ENCODE measurements at regions of chr6 and their contacts with region 1.

Region 1: GRCh38 chr6:16533721-16534136 is 227.5 kb downstream of the ATXN1 start:
- DNase-seq: no peak
- ATAC-seq: no peak
- H3K4me3 ChIP-seq: no peak overlapping the region
- H3K27ac ChIP-seq: no peak overlapping the region
- H3K4me1 ChIP-seq: peaks cover 2% of the 10 kb centered on the region
- H3K27me3 ChIP-seq: no peaks in the 10 kb centered on the region
- CTCF ChIP-seq: no peak
- EP300 ChIP-seq: no peak
- POLR2A ChIP-seq: no peak
- RAD21 ChIP-seq: no peak

Region 2: DNA sequence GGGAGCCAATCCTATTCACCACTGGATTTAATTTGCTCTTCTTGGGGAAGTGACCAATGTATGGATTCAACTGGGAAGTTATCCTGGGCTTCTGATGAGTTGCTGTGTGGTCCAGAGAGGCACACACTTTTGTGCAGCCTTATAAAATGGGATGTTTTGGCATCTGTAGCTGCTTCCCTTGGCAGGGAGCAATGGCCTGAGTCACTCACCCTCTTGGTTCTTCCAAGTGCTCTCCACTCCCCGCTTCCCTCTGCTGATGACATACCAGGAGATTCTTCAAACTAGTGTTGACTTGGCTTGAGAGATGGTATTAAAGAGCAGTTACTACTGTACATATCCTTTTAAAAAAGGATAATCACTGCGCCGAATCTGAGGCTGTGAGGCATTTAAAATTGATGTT is 1182.1 kb before region 1 on chr6:
- CTCF ChIA-PET with region 1: no interaction called
- POLR2A ChIA-PET with region 1: no interaction called
- in situ Hi-C with region 1: no loop called
- intact Hi-C with region 1: no loop called
- DNase-seq: no peak
- ATAC-seq: no peak
- H3K4me3 ChIP-seq: no peak overlapping the region
- H3K27ac ChIP-seq: no peak overlapping the region
- H3K4me1 ChIP-seq: no peaks in the 10 kb centered on the region
- H3K27me3 ChIP-seq: no peaks in the 10 kb centered on the region
- CTCF ChIP-seq: no peak
- EP300 ChIP-seq: no peak
- POLR2A ChIP-seq: no peak
- RAD21 ChIP-seq: no peak

Region 3: GRCh38 chr6:16602035-16602434 is 68.3 kb after region 1 on chr6:
- CTCF ChIA-PET with region 1: no interaction called
- POLR2A ChIA-PET with region 1: no interaction called
- in situ Hi-C with region 1: no loop called
- intact Hi-C with region 1: no loop called
- DNase-seq: no peak
- ATAC-seq: no peak
- H3K4me3 ChIP-seq: no peak overlapping the region
- H3K27ac ChIP-seq: no peak overlapping the region
- H3K4me1 ChIP-seq: no peaks in the 10 kb centered on the region
- H3K27me3 ChIP-seq: no peaks in the 10 kb centered on the region
- CTCF ChIP-seq: no peak
- EP300 ChIP-seq: no peak
- POLR2A ChIP-seq: no peak
- RAD21 ChIP-seq: no peak

Region 4: DNA sequence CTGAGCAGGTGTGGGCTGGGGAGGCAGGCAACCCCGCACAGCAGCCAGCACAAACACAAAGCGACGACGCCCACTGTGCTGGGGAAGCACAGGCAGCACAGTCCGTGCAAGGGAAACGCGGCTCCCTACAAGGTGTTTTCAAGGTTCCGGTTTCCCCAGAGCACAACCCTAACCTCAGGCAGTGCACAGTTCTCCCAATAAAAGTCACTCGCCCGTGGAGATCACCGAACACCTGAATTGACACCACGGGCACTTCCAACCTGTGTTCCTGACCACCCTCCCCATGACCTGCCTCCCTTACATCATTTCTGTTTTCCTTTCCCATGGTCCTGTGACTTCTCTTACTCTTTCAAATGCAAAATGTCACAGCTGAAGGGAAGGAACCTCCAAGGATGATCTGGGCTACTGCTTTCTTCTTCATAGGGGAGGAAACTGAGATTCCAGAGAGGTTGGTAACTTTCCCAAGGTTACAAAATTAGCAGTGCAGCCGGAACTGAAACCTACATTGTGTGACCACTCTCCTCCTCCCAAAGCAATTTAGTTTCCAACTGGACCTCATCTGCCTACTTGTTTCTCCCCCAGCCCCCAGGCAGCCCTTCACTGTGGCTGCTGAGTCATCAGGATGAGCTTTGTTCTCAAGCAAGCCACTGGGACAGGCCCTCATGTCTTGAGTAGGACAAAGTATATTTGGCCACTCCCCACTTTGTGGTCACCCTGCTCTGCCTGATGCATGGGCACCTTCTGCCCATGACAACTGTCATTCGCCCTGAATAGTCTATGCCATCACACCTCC is 102.3 kb after region 1 on chr6:
- CTCF ChIA-PET with region 1: no interaction called
- POLR2A ChIA-PET with region 1: no interaction called
- in situ Hi-C with region 1: no loop called
- intact Hi-C with region 1: loop called (anchors 10 kb)
- DNase-seq: peak; percentile 33
- ATAC-seq: peak; percentile 91
- H3K4me3 ChIP-seq: peak overlapping the region; percentile 19 to 62 (median 46); a peak in 5 of 6 replicates
- H3K27ac ChIP-seq: peak overlapping the region; percentile 54
- H3K4me1 ChIP-seq: peaks cover 37% of the 10 kb centered on the region
- H3K27me3 ChIP-seq: no peaks in the 10 kb centered on the region
- CTCF ChIP-seq: no peak
- EP300 ChIP-seq: no peak
- POLR2A ChIP-seq: no peak
- RAD21 ChIP-seq: no peak

Measured in HepG2 (cell line).